Activated CD8-positive, alpha-beta memory T cell treated with anti-CD3 and anti-CD28 coated beads, Interleukin-2, amount 10 ng/mL, durations not matched to agents 7 days and 5 days (primary cell): ENCODE measurements at regions of chr20 and their contacts with region 1.

Region 1: DNA sequence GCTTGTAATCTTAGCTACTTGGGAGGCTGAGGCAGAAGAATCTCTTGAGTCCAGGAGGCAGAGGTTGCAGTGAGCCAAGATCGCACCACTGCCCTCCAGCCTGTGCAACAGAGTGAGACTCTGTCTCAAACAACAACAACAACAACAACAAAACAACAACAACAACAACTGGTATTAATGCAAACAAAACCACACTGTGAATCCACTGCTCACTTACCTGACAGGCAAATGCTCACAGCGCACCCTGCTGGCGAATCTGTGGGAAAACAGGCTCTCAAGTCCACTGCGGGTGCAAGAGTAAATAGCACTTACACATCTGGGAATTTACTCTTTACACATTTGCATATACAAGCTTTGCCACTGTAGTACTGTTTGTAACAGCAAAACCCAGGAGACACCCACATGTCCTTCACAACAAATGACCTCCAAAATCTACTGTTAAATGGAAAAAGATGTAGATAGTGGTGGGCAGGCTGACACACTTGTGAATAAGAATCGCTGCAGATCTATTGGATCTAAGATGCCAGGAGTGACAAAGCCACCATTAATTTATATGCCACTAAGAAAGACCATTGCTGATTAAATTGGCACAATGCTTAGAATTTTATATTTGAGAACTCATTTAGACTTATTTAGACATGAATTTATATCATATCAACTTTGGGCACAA is 29.3 kb downstream of the NSFL1C start:
- DNase-seq: peak; percentile 85
- ATAC-seq: peak; percentile 63
- H3K4me3 Mint-ChIP-seq: no peak overlapping the region
- H3K27ac Mint-ChIP-seq: no peak overlapping the region
- H3K4me1 Mint-ChIP-seq: peaks cover 28% of the 10 kb centered on the region
- H3K27me3 Mint-ChIP-seq: peaks cover 21% of the 10 kb centered on the region

Region 2: DNA sequence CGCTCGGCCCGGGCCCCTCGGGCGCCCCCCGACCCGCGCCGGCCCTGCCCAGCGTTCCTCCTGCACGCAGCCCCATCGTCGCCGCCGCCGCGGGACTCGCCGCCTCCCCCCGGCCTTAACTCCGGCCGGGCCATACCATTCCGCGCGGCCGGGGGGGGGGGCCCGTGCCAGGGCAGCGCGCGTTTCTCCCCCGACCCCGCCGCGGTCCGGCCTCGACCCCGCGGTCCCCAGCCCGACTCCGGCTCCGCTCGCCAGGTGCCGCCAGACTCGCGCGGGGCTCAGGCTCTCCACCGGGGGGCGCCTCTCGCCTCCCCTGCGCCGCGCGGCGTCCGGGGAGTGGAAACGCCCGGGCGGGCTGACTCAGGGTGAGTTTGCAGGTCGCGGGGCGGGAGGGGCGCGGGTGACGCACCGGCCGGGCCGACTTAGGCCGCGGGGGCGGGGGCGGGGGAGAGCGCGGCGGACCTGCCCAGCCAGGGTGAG is 784.2 kb before region 1 on chr20 and contains the start of gene SRXN1:
- CTCF ChIA-PET with region 1: no interaction called
- DNase-seq: peak; percentile 88
- ATAC-seq: peak; percentile 91
- H3K4me3 Mint-ChIP-seq: peak within 1 kb of the TSS; percentile 82
- H3K27ac Mint-ChIP-seq: peak within 1 kb of the TSS; percentile 85
- H3K4me1 Mint-ChIP-seq: peaks cover 26% of the 10 kb centered on the region
- H3K27me3 Mint-ChIP-seq: peaks cover 15% of the 10 kb centered on the region
- total RNA-seq, gene SRXN1: 17.7 to 20.0 TPM

Region 3: GRCh38 chr20:1313236-1313964 is 124.0 kb before region 1 on chr20:
- CTCF ChIA-PET with region 1: interaction called, 41 read pairs
- DNase-seq: peak; percentile 63
- ATAC-seq: peak; percentile 56
- H3K4me3 Mint-ChIP-seq: no peak overlapping the region
- H3K27ac Mint-ChIP-seq: no peak overlapping the region
- H3K4me1 Mint-ChIP-seq: peaks cover 19% of the 10 kb centered on the region
- H3K27me3 Mint-ChIP-seq: peaks cover 4% of the 10 kb centered on the region

Region 4: GRCh38 chr20:1392823-1393506 is 44.4 kb before region 1 on chr20 and contains the start of gene FKBP1A:
- CTCF ChIA-PET with region 1: interaction called, 12 read pairs
- DNase-seq: peak; percentile 94
- ATAC-seq: peak; percentile 89
- H3K4me3 Mint-ChIP-seq: peak within 1 kb of the TSS; percentile 84
- H3K27ac Mint-ChIP-seq: peak within 1 kb of the TSS; percentile 78
- H3K4me1 Mint-ChIP-seq: peaks cover 58% of the 10 kb centered on the region
- H3K27me3 Mint-ChIP-seq: peaks cover 21% of the 10 kb centered on the region
- total RNA-seq, gene FKBP1A: 247 to 273 TPM

Region 5: GRCh38 chr20:1466211-1467081 is 29.1 kb after region 1 on chr20 and contains the start of gene NSFL1C:
- CTCF ChIA-PET with region 1: interaction called, 13 read pairs
- DNase-seq: peak; percentile 97
- ATAC-seq: peak; percentile 98
- H3K4me3 Mint-ChIP-seq: peak within 1 kb of the TSS; percentile 79
- H3K27ac Mint-ChIP-seq: peak within 1 kb of the TSS; percentile 78
- H3K4me1 Mint-ChIP-seq: peaks cover 39% of the 10 kb centered on the region
- H3K27me3 Mint-ChIP-seq: peaks cover 16% of the 10 kb centered on the region
- total RNA-seq, gene NSFL1C: 55.6 to 65.0 TPM

Region 6: GRCh38 chr20:1535420-1536175 is 98.2 kb after region 1 on chr20:
- CTCF ChIA-PET with region 1: no interaction called
- DNase-seq: no peak
- ATAC-seq: no peak
- H3K4me3 Mint-ChIP-seq: no peak overlapping the region
- H3K27ac Mint-ChIP-seq: no peak overlapping the region
- H3K4me1 Mint-ChIP-seq: no peaks in the 10 kb centered on the region
- H3K27me3 Mint-ChIP-seq: peaks cover 10% of the 10 kb centered on the region